Endothelial cell of umbilical vein (primary cell): ENCODE measurements at regions of chr13 and their contacts with region 1.

Region 1: DNA sequence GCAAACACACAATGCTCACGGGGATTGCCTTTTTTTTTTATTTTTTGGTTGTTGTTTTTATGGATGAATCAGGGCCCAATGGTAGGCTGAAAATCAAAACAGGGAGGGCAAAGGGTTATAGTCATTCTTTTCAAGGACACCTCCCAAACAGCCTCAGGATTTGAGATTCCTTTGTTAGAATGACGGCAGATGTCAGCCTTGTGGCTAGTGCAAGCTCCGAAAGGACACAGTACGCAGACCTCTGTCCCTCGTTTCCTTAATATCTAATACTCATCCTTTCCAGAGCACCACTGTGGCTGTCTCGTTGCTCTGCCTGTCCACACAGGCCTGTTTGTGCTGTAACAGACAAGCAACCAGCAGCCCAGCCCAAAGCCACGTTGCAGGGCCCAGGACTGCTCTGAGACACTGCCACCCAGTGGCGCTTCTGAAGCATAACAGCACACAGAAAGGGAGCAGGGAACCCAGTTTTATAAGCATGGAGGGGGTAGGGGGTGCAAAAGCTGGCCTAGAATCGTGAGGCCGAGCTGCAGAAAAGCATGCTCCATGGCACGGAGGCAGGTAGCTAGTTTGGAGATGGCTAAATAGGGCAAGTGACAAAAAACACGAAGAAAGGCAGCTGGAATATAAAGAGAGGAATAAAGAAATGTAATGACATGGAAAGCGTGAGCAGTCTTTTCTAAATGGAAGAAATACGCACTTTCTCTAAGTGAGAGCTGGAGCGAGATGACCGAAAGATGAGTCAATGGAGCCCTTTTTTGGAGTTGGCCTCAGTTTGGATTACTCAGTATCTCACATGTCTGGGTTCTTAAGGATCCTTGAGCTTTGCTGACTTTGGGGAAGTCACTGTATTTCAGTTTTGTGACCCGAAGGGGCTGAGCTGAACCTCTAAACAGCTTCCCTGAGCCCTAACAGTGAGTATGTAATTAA is 40.7 kb upstream of the MEDAG start:
- DNase-seq: peak; percentile 92
- H3K4me3 ChIP-seq: no peak overlapping the region
- H3K27ac ChIP-seq: peak overlapping the region; percentile 95
- H3K4me1 ChIP-seq: peaks cover 29% of the 10 kb centered on the region
- H3K27me3 ChIP-seq: no peaks in the 10 kb centered on the region
- CTCF ChIP-seq: peak; percentile 91 to 96
- POLR2A ChIP-seq: no peak

Region 2: GRCh38 chr13:30196025-30196424 is 669.4 kb before region 1 on chr13:
- CTCF ChIA-PET with region 1: no interaction called
- POLR2A ChIA-PET with region 1: no interaction called
- dilution Hi-C with region 1: no loop called
- intact Hi-C with region 1: no loop called
- DNase-seq: peak; percentile 4
- H3K4me3 ChIP-seq: no peak overlapping the region
- H3K27ac ChIP-seq: no peak overlapping the region
- H3K4me1 ChIP-seq: no peaks in the 10 kb centered on the region
- H3K27me3 ChIP-seq: no peaks in the 10 kb centered on the region
- CTCF ChIP-seq: no peak
- POLR2A ChIP-seq: no peak

Region 3: GRCh38 chr13:30408319-30409101 is 456.9 kb before region 1 on chr13:
- CTCF ChIA-PET with region 1: no interaction called
- POLR2A ChIA-PET with region 1: no interaction called
- dilution Hi-C with region 1: no loop called
- intact Hi-C with region 1: loop called (anchors 1 kb)
- DNase-seq: peak; percentile 94
- H3K4me3 ChIP-seq: no peak overlapping the region
- H3K27ac ChIP-seq: no peak overlapping the region
- H3K4me1 ChIP-seq: peaks cover 3% of the 10 kb centered on the region
- H3K27me3 ChIP-seq: peaks cover 0 to 7% of the 10 kb centered on the region in 2 experiments
- CTCF ChIP-seq: peak; percentile 59 to 83
- POLR2A ChIP-seq: peak; percentile 34

Region 4: DNA sequence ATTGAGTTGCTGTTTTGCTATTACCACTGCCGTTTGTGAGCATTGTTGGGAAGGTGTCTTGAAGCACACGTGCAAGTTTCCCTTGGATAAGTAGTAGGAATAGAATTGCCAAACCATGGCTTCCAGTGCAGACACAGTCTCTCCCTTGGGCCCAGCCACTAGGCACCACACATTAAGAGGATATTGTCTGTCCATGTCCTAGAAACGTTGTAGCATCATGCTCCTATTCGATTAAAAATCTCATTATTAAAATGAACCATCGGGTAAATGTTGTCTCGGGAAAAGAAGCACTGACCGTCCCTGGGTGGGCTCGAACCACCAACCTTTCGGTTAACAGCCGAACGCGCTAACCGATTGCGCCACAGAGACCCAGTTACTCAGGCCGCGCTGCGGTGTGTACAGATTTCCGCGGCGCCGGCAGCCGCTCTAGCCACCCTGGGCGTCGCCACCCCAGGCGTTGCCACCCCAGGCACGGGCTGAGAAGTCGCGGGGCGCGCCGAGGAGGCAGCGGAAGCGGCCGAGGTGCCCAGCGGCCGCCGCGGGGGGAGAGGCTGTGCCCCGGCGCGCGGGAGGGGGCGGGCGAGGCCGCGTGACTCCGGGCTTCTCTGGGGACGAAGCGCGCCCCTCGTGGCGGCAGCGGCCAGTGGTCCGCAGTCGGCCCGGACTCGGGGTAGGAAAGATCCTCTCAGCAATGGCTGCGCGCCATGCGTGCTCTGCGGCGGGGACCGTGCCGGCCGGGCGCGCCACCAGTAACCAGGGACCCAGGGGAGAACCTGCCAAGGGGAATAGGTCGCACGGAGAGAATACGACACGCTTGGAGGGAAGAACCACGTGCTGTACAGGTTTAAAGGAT is 191.5 kb before region 1 on chr13:
- CTCF ChIA-PET with region 1: interaction called, 3 read pairs
- POLR2A ChIA-PET with region 1: no interaction called
- dilution Hi-C with region 1: no loop called
- intact Hi-C with region 1: loop called (anchors 1 kb)
- DNase-seq: peak; percentile 88
- H3K4me3 ChIP-seq: peak overlapping the region; percentile 39 to 48 (median 43)
- H3K27ac ChIP-seq: peak overlapping the region; percentile 66
- H3K4me1 ChIP-seq: peaks cover 8% of the 10 kb centered on the region
- H3K27me3 ChIP-seq: no peaks in the 10 kb centered on the region
- CTCF ChIP-seq: peak; percentile 82 to 83
- POLR2A ChIP-seq: no peak

Region 5: GRCh38 chr13:30802953-30803478 is 62.4 kb before region 1 on chr13:
- CTCF ChIA-PET with region 1: interaction called, 32 read pairs
- POLR2A ChIA-PET with region 1: interaction called, 4 read pairs
- dilution Hi-C with region 1: loop called (anchors 10 kb)
- intact Hi-C with region 1: loop called (anchors 1 kb)
- DNase-seq: peak; percentile 74
- H3K4me3 ChIP-seq: peak overlapping the region in 1 of 3 experiments; percentile 23
- H3K27ac ChIP-seq: no peak overlapping the region
- H3K4me1 ChIP-seq: peaks cover 28% of the 10 kb centered on the region
- H3K27me3 ChIP-seq: no peaks in the 10 kb centered on the region
- CTCF ChIP-seq: peak; percentile 93 to 94
- POLR2A ChIP-seq: no peak

Region 6: GRCh38 chr13:30847650-30848307 is 17.6 kb before region 1 on chr13:
- CTCF ChIA-PET with region 1: interaction called, 19 read pairs
- POLR2A ChIA-PET with region 1: interaction called, 4 read pairs
- dilution Hi-C with region 1: no loop called
- intact Hi-C with region 1: no loop called
- DNase-seq: no peak
- H3K4me3 ChIP-seq: no peak overlapping the region
- H3K27ac ChIP-seq: no peak overlapping the region
- H3K4me1 ChIP-seq: peaks cover 5% of the 10 kb centered on the region
- H3K27me3 ChIP-seq: peaks cover 2 to 5% of the 10 kb centered on the region in 2 experiments
- CTCF ChIP-seq: no peak
- POLR2A ChIP-seq: no peak

Region 7: GRCh38 chr13:30932481-30933353 is 67.3 kb after region 1 on chr13 and contains the start of gene TEX26:
- CTCF ChIA-PET with region 1: interaction called, 4 read pairs
- POLR2A ChIA-PET with region 1: no interaction called
- dilution Hi-C with region 1: no loop called
- intact Hi-C with region 1: loop called (anchors 2 kb)
- DNase-seq: peak; percentile 38
- H3K4me3 ChIP-seq: no peak within 1 kb of the TSS
- H3K27ac ChIP-seq: no peak within 1 kb of the TSS
- H3K4me1 ChIP-seq: no peaks in the 10 kb centered on the region
- H3K27me3 ChIP-seq: peaks cover 28 to 39% of the 10 kb centered on the region in 2 experiments
- CTCF ChIP-seq: peak in 1 of 2 donors; percentile 31
- POLR2A ChIP-seq: no peak
- total RNA-seq, gene TEX26: not detected in 2 replicates